Sigmoid colon (tissue), 7 donors: ENCODE measurements at regions of chr3 and their contacts with region 1.

Region 1: GRCh38 chr3:177197041-177197727 is at the start of gene TBL1XR1:
- DNase-seq: peak; percentile 97
- H3K4me3 ChIP-seq: peak within 1 kb of the TSS; percentile 91 to 99 (median 97)
- H3K27ac ChIP-seq: peak within 1 kb of the TSS; percentile 98 to 100 (median 99)
- H3K4me1 ChIP-seq: peaks cover 0 to 42% (median 27%) of the 10 kb centered on the region in 4 donors
- H3K27me3 ChIP-seq: no peaks in the 10 kb centered on the region
- CTCF ChIP-seq: no peak
- EP300 ChIP-seq: peak; percentile 25 to 84 (median 69)
- POLR2A ChIP-seq: no peak
- total RNA-seq, gene TBL1XR1: 88.9 to 131 (median 102) TPM

Region 2: DNA sequence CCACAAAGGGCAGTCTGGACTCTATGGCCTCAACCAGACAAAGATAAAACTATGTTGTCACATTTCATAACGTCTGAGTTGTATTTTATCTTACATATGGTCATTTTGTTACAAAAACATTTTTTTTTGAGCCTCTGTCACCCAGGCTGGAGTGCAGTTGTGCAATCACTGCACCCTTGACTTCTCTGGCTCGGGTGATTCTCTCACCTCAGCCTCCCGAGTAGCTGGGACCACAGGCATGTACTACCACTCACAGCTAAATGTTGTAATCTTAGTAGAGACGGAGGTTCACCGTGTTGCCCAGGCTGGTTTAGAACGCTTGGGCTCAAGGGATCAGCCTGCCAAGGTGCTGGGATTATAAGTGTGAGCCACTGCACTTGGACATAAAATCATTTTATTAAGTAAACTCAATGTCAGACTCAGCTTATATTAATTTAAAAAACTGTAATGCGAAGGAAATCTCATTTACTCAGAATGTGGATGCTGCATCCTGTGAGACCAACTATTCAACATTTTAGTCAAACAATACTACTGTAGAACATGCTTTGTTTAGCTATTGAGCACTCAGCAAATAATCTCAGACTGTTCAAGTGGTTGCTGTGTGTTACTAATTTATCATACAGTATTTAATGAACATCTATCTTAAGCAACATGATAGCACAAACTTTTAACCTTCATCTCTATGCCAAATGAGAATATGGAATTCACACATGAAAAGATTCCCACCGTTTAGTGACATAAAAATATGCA is 209.1 kb before region 1 on chr3:
- intact Hi-C with region 1: no loop called
- DNase-seq: no peak
- H3K4me3 ChIP-seq: no peak overlapping the region
- H3K27ac ChIP-seq: no peak overlapping the region
- H3K4me1 ChIP-seq: no peaks in the 10 kb centered on the region
- H3K27me3 ChIP-seq: no peaks in the 10 kb centered on the region
- CTCF ChIP-seq: no peak
- EP300 ChIP-seq: no peak
- POLR2A ChIP-seq: no peak

Region 3: GRCh38 chr3:177057768-177058167 is 139.4 kb before region 1 on chr3:
- intact Hi-C with region 1: loop called (anchors 2 kb)
- DNase-seq: no peak
- H3K4me3 ChIP-seq: no peak overlapping the region
- H3K27ac ChIP-seq: no peak overlapping the region
- H3K4me1 ChIP-seq: peaks cover 0 to 49% (median 30%) of the 10 kb centered on the region in 4 donors
- H3K27me3 ChIP-seq: no peaks in the 10 kb centered on the region
- CTCF ChIP-seq: no peak
- EP300 ChIP-seq: no peak
- POLR2A ChIP-seq: no peak

Region 4: GRCh38 chr3:177069514-177070329 is 127.5 kb before region 1 on chr3:
- intact Hi-C with region 1: no loop called
- DNase-seq: no peak
- H3K4me3 ChIP-seq: no peak overlapping the region
- H3K27ac ChIP-seq: no peak overlapping the region
- H3K4me1 ChIP-seq: peaks cover 0 to 62% (median 33%) of the 10 kb centered on the region in 4 donors
- H3K27me3 ChIP-seq: no peaks in the 10 kb centered on the region
- CTCF ChIP-seq: no peak
- EP300 ChIP-seq: no peak
- POLR2A ChIP-seq: no peak

Region 5: DNA sequence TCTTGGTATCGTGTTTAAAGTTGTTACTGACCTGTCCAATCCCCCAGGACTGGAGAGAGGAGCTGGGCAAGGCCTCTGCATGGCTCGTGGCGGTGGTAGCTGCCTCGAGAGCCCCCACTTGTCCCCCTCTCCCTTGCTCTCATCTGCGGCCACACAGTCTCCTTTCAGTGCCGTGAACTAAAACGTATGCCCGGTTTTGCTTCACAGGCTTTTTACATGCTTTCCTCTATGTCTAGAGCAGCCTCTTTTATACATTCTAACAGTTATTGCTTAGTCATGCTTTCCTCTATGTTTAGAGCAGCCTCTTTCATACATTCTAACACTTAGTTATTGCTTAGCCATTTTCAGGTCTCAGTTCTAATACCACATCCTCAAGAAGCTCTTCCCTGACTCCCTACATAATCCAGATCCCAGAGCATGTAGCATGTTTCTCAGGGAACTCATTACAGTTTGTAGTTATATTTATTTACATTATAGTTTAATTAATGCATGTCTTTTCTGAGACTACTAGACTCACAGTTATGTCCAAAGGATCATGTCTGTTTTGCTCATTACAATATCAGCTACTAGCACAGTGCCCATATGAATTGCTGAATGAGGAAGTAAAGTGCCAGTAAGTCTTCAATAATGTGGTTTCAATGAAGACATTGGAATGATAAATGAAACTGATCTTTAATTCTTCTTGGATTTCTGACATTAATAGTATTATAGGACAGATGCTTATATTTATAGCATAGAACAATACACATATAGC is 66.6 kb after region 1 on chr3:
- intact Hi-C with region 1: loop called (anchors 10 kb)
- DNase-seq: no peak
- H3K4me3 ChIP-seq: no peak overlapping the region
- H3K27ac ChIP-seq: peak overlapping the region in 2 of 4 donors; percentile 15 to 60
- H3K4me1 ChIP-seq: peaks cover 0 to 10% (median 3%) of the 10 kb centered on the region in 4 donors
- H3K27me3 ChIP-seq: no peaks in the 10 kb centered on the region
- CTCF ChIP-seq: no peak
- EP300 ChIP-seq: no peak
- POLR2A ChIP-seq: no peak

Region 6: DNA sequence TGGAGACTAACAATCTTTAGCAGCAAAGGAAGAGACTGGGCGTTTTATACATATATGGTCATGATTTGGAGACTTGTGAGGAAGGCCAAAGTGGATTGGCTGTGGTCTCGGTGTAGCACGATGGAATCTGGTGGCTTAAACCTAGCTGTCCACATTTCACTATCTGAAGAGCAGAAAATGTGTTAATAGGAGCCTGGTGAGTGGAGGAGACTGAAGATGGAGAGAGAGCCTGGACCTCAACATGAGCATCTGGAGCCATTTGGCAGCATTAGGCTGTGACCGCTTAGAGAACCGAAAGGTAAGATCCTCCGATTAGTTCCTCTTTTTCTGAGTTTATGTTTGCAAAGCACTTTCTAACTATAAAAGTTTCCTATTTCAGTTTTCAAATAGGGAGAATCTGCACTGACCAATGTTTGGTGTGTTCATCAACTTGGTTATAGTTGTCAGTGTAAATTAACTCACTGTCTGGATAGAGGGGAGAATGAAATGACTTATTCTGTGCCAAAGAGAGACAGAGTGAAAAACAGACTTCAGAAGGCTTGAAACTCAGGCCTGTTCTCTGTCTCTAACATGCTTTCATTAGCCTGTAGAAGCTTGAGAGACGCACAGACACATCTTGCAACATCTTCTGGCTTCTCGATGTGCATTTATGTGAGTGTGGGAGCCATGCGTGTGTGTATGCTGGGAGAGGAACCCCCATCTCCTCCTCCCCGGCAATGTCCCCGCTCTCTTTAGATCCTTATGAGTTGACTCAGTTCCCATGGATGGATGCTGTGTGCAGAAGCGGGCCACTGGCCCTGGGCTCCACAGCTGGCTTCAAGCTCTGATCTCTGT is 244.8 kb after region 1 on chr3:
- intact Hi-C with region 1: loop called (anchors 2 kb)
- DNase-seq: peak; percentile 82
- H3K4me3 ChIP-seq: peak overlapping the region; percentile 15 to 50 (median 35)
- H3K27ac ChIP-seq: peak overlapping the region; percentile 80 to 88 (median 81)
- H3K4me1 ChIP-seq: peaks cover 0 to 74% (median 57%) of the 10 kb centered on the region in 4 donors
- H3K27me3 ChIP-seq: no peaks in the 10 kb centered on the region
- CTCF ChIP-seq: no peak
- EP300 ChIP-seq: no peak
- POLR2A ChIP-seq: no peak

Region 7: GRCh38 chr3:177597311-177598096 is 400.3 kb after region 1 on chr3:
- intact Hi-C with region 1: loop called (anchors 10 kb)
- DNase-seq: peak; percentile 84
- H3K4me3 ChIP-seq: peak overlapping the region in 2 of 4 donors; percentile 0 to 7
- H3K27ac ChIP-seq: peak overlapping the region; percentile 69 to 84 (median 79)
- H3K4me1 ChIP-seq: peaks cover 0 to 68% (median 55%) of the 10 kb centered on the region in 4 donors
- H3K27me3 ChIP-seq: no peaks in the 10 kb centered on the region
- CTCF ChIP-seq: no peak
- EP300 ChIP-seq: peak in 1 of 4 donors; percentile 26
- POLR2A ChIP-seq: no peak

Region 8: GRCh38 chr3:178325330-178325729 is 1128.1 kb after region 1 on chr3:
- intact Hi-C with region 1: loop called (anchors 5 kb)
- DNase-seq: no peak
- H3K4me3 ChIP-seq: no peak overlapping the region
- H3K27ac ChIP-seq: peak overlapping the region in 2 of 4 donors; percentile 5 to 33
- H3K4me1 ChIP-seq: peaks cover 0 to 26% (median 19%) of the 10 kb centered on the region in 4 donors
- H3K27me3 ChIP-seq: no peaks in the 10 kb centered on the region
- CTCF ChIP-seq: peak in 2 of 4 experiments; percentile 36 to 47
- EP300 ChIP-seq: no peak
- POLR2A ChIP-seq: no peak

Region 9: GRCh38 chr3:178385280-178385952 is 1188.2 kb after region 1 on chr3:
- intact Hi-C with region 1: loop called (anchors 2 kb)
- DNase-seq: no peak
- H3K4me3 ChIP-seq: no peak overlapping the region
- H3K27ac ChIP-seq: peak overlapping the region; percentile 51 to 72 (median 71)
- H3K4me1 ChIP-seq: peaks cover 0 to 45% (median 34%) of the 10 kb centered on the region in 4 donors
- H3K27me3 ChIP-seq: no peaks in the 10 kb centered on the region
- CTCF ChIP-seq: peak; percentile 82 to 92 (median 86)
- EP300 ChIP-seq: no peak
- POLR2A ChIP-seq: no peak